ENCODE measurements at regions of chr1 and their contacts with region 1.

Region 1: GRCh38 chr1:117599286-117600221 is 6.3 kb upstream of the TENT5C start:
- DNase-seq: no peak

Region 2: GRCh38 chr1:117534995-117535467 is 64.5 kb before region 1 on chr1:
- intact Hi-C with region 1: loop called (anchors 5 kb)
- DNase-seq: no peak